ENCODE measurements at regions of chr10 and their contacts with region 1.

Region 1: GRCh38 chr10:93482145-93482834 is at the start of gene MYOF:
- DNase-seq: peak; percentile 88
- ATAC-seq: peak; percentile 71
- H3K4me3 ChIP-seq: peak within 1 kb of the TSS; percentile 97
- H3K27ac ChIP-seq: peak within 1 kb of the TSS; percentile 100
- H3K4me1 ChIP-seq: peaks cover 24% of the 10 kb centered on the region
- H3K27me3 ChIP-seq: no peaks in the 10 kb centered on the region
- CTCF ChIP-seq: peak; percentile 46; the same call in 1 of the 2 replicates
- total RNA-seq, gene MYOF: 174 and 189 TPM in 2 replicates

Region 2: DNA sequence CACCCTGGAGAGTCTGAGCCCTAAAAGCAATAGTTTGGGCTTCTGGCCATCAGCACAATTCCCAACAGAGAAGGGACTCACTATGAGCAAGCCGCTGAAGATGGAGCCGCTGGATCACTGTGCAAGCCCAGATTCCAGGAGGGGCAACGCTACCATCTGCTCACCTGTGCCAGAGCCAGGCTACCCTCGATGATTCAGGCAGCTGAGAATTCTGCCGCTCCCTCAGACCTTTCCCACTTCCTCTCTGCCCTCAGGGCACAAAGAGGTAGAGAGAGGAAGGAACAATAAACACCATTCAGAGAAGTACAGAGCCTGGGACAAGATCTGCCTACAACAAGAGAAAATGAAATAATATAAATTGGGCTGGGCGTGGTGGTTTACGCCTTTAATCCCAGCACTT is 98.3 kb before region 1 on chr10:
- CTCF ChIA-PET with region 1: no interaction called
- POLR2A ChIA-PET with region 1: interaction called, 4 read pairs
- intact Hi-C with region 1: loop called (anchors 2 kb)
- DNase-seq: peak; percentile 98
- ATAC-seq: peak; percentile 85
- H3K4me3 ChIP-seq: no peak overlapping the region
- H3K27ac ChIP-seq: peak overlapping the region; percentile 98
- H3K4me1 ChIP-seq: peaks cover 42% of the 10 kb centered on the region
- H3K27me3 ChIP-seq: no peaks in the 10 kb centered on the region
- CTCF ChIP-seq: no peak

Region 3: DNA sequence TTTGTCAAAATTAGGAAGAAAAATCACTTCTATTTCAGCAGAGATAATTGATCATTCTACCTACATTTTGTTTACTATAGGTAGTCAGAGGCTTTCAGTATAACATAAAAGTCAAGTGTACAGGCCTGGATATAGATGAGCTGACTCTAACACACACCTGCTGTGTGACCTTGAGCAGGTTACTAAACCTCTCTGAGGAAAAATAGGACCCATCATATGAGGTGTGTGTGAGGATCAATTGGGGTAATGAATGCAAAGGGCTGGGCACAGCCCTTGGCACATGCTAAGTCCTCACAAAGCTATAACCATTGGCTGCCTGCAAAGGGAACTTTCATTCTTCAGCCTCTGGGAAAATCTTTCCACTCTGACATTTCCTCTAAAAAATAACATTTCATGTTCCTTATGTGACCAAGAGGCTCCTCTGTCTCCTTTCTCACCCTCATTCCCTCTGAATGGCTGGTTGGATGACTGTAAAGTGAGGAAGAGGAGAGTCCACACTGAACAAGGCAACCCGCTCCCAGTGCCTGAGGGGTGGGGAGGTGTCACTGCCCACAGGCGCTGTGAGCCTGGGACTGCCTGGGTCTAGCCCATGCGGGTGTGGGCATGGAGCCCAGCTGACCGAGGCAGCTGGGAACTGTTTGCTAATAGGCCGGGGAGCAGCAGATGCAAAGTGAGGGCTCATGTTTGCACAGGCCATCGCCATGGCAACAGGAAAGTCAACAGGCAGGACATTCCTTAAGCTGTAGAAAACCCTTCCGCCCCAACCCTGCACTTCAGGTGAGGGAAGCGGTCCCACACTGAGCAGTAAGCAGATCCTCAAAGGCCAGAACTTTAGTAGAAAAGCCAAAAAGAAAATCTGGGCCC is 37.0 kb before region 1 on chr10:
- CTCF ChIA-PET with region 1: no interaction called
- POLR2A ChIA-PET with region 1: interaction called, 15 read pairs
- intact Hi-C with region 1: no loop called
- DNase-seq: peak; percentile 93
- ATAC-seq: peak; percentile 95
- H3K4me3 ChIP-seq: no peak overlapping the region
- H3K27ac ChIP-seq: peak overlapping the region; percentile 80
- H3K4me1 ChIP-seq: peaks cover 53% of the 10 kb centered on the region
- H3K27me3 ChIP-seq: no peaks in the 10 kb centered on the region
- CTCF ChIP-seq: no peak

Region 4: GRCh38 chr10:93464776-93465388 is 17.4 kb before region 1 on chr10:
- CTCF ChIA-PET with region 1: interaction called, 9 read pairs
- POLR2A ChIA-PET with region 1: interaction called, 16 read pairs
- intact Hi-C with region 1: loop called (anchors 1 kb)
- DNase-seq: no peak
- ATAC-seq: no peak
- H3K4me3 ChIP-seq: no peak overlapping the region
- H3K27ac ChIP-seq: peak overlapping the region; percentile 99
- H3K4me1 ChIP-seq: peaks cover 82% of the 10 kb centered on the region
- H3K27me3 ChIP-seq: no peaks in the 10 kb centered on the region
- CTCF ChIP-seq: no peak

Region 5: GRCh38 chr10:93680412-93681047 is 198.2 kb after region 1 on chr10:
- CTCF ChIA-PET with region 1: no interaction called
- POLR2A ChIA-PET with region 1: no interaction called
- intact Hi-C with region 1: loop called (anchors 5 kb)
- DNase-seq: peak; percentile 78
- ATAC-seq: peak; percentile 69
- H3K4me3 ChIP-seq: no peak overlapping the region
- H3K27ac ChIP-seq: no peak overlapping the region
- H3K4me1 ChIP-seq: no peaks in the 10 kb centered on the region
- H3K27me3 ChIP-seq: no peaks in the 10 kb centered on the region
- CTCF ChIP-seq: peak; percentile 69